WTC11 (cell line): ENCODE measurements at regions of chr1 and their contacts with region 1.

Region 1: DNA sequence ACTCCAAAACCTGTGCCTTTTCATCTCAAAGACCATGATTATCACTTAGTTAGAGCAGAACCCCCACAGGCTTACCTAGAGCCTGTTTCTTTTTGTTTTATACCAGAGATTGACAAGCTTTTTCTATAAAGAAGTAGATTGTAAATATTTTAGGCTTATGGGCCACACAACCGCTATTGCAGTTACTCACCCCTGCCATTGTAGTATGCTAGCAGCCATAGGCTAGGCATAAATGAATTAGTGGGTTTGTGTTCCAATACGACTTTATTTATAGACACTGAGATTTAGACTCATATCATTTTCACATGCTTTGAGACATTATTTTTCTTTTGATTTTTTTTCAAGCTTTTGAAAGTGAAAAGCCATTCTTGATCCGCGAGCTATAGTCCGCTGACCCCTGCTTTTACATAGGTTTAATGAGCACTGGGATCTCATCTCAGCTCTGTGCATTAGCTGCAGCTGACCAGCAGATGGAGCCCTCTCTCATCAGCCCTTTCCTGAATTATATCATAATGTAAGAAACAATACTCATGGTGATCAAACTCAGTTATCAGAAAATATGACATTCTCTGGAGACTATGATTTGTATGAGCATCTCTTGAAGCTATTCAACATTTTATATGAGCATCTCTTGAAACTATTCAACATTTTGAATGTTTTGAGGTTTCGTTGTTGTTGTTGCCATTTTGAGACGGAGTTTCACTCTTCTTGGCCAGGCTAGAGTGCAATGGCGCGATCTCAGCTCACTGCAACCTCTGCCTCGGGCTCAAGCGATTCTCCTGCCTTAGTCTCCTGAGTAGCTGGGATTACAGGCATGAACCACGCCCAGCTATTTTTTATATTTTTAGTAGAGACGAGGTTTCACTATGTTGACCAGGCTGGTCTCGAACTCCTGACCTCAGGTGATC is 111.9 kb upstream of the L1TD1 start:
- DNase-seq: peak; percentile 57
- ATAC-seq: peak; percentile 94
- H3K4me3 Mint-ChIP-seq: no peak overlapping the region
- H3K27ac Mint-ChIP-seq: peak overlapping the region; percentile 19
- H3K4me1 Mint-ChIP-seq: no peaks in the 10 kb centered on the region
- H3K27me3 Mint-ChIP-seq: no peaks in the 10 kb centered on the region
- CTCF ChIP-seq: peak; percentile 86

Region 2: DNA sequence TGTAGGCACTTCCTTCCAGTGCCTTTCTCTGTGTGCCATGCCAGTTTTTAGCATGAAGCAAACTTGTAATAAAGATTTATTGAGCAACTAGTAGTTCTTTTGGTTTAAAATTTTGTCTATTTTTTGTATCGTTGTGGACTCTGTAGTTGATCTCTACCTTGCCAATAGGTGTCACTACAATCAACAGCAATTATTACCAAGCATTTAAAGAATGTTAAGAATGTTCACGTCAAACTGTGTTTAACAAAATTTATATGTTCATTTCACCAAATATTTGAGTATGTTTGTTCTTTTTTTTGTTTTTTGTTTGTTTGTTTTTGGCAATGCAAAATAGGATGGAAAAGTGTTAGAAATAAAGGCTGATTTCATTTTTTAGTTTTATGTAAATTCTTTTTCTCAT is 132.3 kb before region 1 on chr1:
- CTCF ChIA-PET with region 1: interaction called, 16 read pairs
- POLR2A ChIA-PET with region 1: no interaction called
- DNase-seq: no peak
- ATAC-seq: peak; percentile 50
- H3K4me3 Mint-ChIP-seq: 0 out of 2 replicates have a peak overlapping the region, but pooled peaks have one; percentile 29
- H3K27ac Mint-ChIP-seq: peak overlapping the region; percentile 96
- H3K4me1 Mint-ChIP-seq: peaks cover 37% of the 10 kb centered on the region
- H3K27me3 Mint-ChIP-seq: no peaks in the 10 kb centered on the region
- CTCF ChIP-seq: no peak

Region 3: GRCh38 chr1:62057641-62058295 is 24.9 kb before region 1 on chr1:
- CTCF ChIA-PET with region 1: interaction called, 11 read pairs
- POLR2A ChIA-PET with region 1: no interaction called
- DNase-seq: no peak
- ATAC-seq: no peak
- H3K4me3 Mint-ChIP-seq: no peak overlapping the region
- H3K27ac Mint-ChIP-seq: no peak overlapping the region
- H3K4me1 Mint-ChIP-seq: peaks cover 35% of the 10 kb centered on the region
- H3K27me3 Mint-ChIP-seq: no peaks in the 10 kb centered on the region; the same call in 1 of the 2 replicates
- CTCF ChIP-seq: no peak

Region 4: DNA sequence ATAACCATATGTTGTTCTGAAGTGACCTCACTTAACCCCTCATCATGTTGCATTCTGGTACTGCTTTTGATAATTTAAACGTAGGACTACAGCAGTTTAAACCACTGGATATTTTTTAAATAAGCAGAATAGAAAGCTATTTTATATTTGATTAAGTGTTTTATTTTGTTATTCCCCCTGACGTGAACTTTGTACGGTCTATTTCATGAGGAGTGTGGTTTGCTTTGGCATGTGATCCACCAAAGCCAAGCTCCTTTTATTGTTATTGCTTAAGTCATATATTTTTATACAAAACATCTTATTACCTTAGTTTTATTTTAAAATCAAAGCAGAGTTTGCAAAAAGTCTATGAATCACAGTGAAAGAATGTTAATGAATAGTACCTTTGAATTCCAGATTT is 10.6 kb after region 1 on chr1:
- CTCF ChIA-PET with region 1: interaction called, 10 read pairs
- POLR2A ChIA-PET with region 1: no interaction called
- DNase-seq: no peak
- ATAC-seq: no peak
- H3K4me3 Mint-ChIP-seq: no peak overlapping the region
- H3K27ac Mint-ChIP-seq: no peak overlapping the region
- H3K4me1 Mint-ChIP-seq: peaks cover 18% of the 10 kb centered on the region
- H3K27me3 Mint-ChIP-seq: no peaks in the 10 kb centered on the region
- CTCF ChIP-seq: no peak

Region 5: GRCh38 chr1:62144238-62144831 is 61.6 kb after region 1 on chr1:
- CTCF ChIA-PET with region 1: interaction called, 38 read pairs
- POLR2A ChIA-PET with region 1: no interaction called
- DNase-seq: peak; percentile 63
- ATAC-seq: peak; percentile 50
- H3K4me3 Mint-ChIP-seq: no peak overlapping the region
- H3K27ac Mint-ChIP-seq: no peak overlapping the region; the same call in 1 of the 2 replicates
- H3K4me1 Mint-ChIP-seq: peaks cover 18% of the 10 kb centered on the region
- H3K27me3 Mint-ChIP-seq: no peaks in the 10 kb centered on the region
- CTCF ChIP-seq: peak; percentile 75; the same call in 1 of the 2 replicates